ENCODE measurements at regions of chr12 and their contacts with region 1.

Region 1: GRCh38 chr12:53379389-53380103 is 430 bp upstream of the SP1 start:
- DNase-seq: peak; percentile 99
- ATAC-seq: peak; percentile 80
- H3K4me3 Mint-ChIP-seq: no peak overlapping the region
- H3K27ac Mint-ChIP-seq: no peak overlapping the region
- H3K4me1 Mint-ChIP-seq: peaks cover 35% of the 10 kb centered on the region
- H3K27me3 Mint-ChIP-seq: no peaks in the 10 kb centered on the region

Region 2: DNA sequence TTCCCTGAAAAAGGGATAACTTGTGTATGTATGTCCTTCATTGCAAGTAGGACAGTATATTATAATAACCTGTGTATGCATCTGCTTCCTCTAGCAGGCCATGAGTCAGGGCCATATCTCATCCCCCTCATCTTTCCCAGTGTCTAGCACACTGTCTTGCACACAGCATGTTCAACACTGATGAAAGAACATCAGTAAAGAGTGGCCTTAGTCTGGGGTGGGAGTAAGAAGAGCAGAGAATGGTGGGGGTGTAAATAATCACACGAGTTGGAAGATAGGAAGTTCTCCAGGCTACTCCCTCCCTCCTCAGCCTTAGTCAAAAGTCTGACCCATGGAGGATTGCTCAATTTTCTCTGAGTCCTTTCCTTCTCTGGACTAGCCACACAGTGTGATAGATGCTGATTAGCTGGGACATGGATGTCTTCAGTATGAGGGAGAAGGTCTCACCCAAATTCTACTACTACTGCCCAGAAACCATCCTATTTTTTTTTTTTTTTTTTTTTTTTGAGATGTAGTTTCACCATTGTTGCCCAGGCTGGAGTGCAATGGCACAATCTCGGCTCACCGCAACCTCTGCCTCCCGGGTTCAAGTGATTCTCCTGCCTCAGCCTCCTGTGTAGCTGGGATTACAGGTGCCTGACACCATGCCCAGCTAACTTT is 14.2 kb before region 1 on chr12:
- CTCF ChIA-PET with region 1: interaction called, 7 read pairs
- POLR2A ChIA-PET with region 1: interaction called, 12 read pairs
- DNase-seq: no peak
- ATAC-seq: no peak
- H3K4me3 Mint-ChIP-seq: no peak overlapping the region
- H3K27ac Mint-ChIP-seq: peak overlapping the region; percentile 4
- H3K4me1 Mint-ChIP-seq: peaks cover 11% of the 10 kb centered on the region
- H3K27me3 Mint-ChIP-seq: no peaks in the 10 kb centered on the region

Region 3: GRCh38 chr12:53414756-53415417 is 35.3 kb after region 1 on chr12:
- CTCF ChIA-PET with region 1: interaction called, 23 read pairs
- POLR2A ChIA-PET with region 1: interaction called, 3 read pairs
- DNase-seq: no peak
- ATAC-seq: no peak
- H3K4me3 Mint-ChIP-seq: no peak overlapping the region
- H3K27ac Mint-ChIP-seq: no peak overlapping the region
- H3K4me1 Mint-ChIP-seq: peaks cover 24% of the 10 kb centered on the region
- H3K27me3 Mint-ChIP-seq: no peaks in the 10 kb centered on the region